ENCODE measurements at regions of chr15 and their contacts with region 1.

Region 1: GRCh38 chr15:68304589-68305337 is 27.2 kb downstream of the FEM1B start:
- DNase-seq: peak; percentile 69 to 82
- H3K4me3 ChIP-seq: no peak overlapping the region
- H3K27ac ChIP-seq: no peak overlapping the region
- H3K4me1 ChIP-seq: peaks cover 20% of the 10 kb centered on the region
- H3K27me3 ChIP-seq: no peaks in the 10 kb centered on the region
- CTCF ChIP-seq: no peak
- POLR2A ChIP-seq: no peak

Region 2: DNA sequence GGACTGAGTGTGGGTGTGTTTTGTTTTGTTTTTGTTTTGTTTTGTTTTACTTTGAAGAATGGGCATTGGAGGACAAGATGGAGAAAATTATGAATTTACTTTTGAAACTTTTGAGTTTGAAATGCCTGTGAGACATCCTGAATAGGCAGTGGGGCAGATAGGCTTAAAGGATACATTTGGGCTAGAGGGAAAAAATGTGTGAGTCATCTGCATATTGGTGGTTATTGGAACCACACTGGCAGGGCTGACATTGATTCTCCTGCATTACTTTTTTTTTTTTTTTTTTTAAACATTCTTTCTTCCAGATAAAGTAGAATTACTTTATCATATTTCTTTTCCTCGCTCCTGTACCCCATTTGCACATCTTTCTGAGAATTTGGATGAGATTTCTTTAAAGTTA is 155.7 kb before region 1 on chr15:
- intact Hi-C with region 1: no loop called
- DNase-seq: no peak
- H3K4me3 ChIP-seq: no peak overlapping the region
- H3K27ac ChIP-seq: no peak overlapping the region
- H3K4me1 ChIP-seq: peaks cover 4% of the 10 kb centered on the region
- H3K27me3 ChIP-seq: no peaks in the 10 kb centered on the region
- CTCF ChIP-seq: no peak
- POLR2A ChIP-seq: no peak

Region 3: GRCh38 chr15:68252925-68253534 is 51.7 kb before region 1 on chr15:
- intact Hi-C with region 1: loop called (anchors 10 kb)
- DNase-seq: no peak
- H3K4me3 ChIP-seq: no peak overlapping the region
- H3K27ac ChIP-seq: peak overlapping the region; percentile 17
- H3K4me1 ChIP-seq: peaks cover 24% of the 10 kb centered on the region
- H3K27me3 ChIP-seq: no peaks in the 10 kb centered on the region
- CTCF ChIP-seq: peak; percentile 77 to 89 (median 85)
- POLR2A ChIP-seq: no peak

Region 4: GRCh38 chr15:68372291-68372811 is 67.6 kb after region 1 on chr15:
- intact Hi-C with region 1: loop called (anchors 5 kb)
- DNase-seq: peak in 1 of 2 donors; percentile 76
- H3K4me3 ChIP-seq: no peak overlapping the region
- H3K27ac ChIP-seq: no peak overlapping the region
- H3K4me1 ChIP-seq: peaks cover 12% of the 10 kb centered on the region
- H3K27me3 ChIP-seq: no peaks in the 10 kb centered on the region
- CTCF ChIP-seq: no peak
- POLR2A ChIP-seq: no peak

Region 5: GRCh38 chr15:68672781-68673205 is 368.0 kb after region 1 on chr15:
- intact Hi-C with region 1: loop called (anchors 10 kb)
- DNase-seq: peak in 1 of 2 donors; percentile 80
- H3K4me3 ChIP-seq: no peak overlapping the region
- H3K27ac ChIP-seq: no peak overlapping the region
- H3K4me1 ChIP-seq: peaks cover 4% of the 10 kb centered on the region
- H3K27me3 ChIP-seq: no peaks in the 10 kb centered on the region
- CTCF ChIP-seq: no peak
- POLR2A ChIP-seq: no peak